ENCODE measurements at regions of chr12 and their contacts with region 1.

Region 1: DNA sequence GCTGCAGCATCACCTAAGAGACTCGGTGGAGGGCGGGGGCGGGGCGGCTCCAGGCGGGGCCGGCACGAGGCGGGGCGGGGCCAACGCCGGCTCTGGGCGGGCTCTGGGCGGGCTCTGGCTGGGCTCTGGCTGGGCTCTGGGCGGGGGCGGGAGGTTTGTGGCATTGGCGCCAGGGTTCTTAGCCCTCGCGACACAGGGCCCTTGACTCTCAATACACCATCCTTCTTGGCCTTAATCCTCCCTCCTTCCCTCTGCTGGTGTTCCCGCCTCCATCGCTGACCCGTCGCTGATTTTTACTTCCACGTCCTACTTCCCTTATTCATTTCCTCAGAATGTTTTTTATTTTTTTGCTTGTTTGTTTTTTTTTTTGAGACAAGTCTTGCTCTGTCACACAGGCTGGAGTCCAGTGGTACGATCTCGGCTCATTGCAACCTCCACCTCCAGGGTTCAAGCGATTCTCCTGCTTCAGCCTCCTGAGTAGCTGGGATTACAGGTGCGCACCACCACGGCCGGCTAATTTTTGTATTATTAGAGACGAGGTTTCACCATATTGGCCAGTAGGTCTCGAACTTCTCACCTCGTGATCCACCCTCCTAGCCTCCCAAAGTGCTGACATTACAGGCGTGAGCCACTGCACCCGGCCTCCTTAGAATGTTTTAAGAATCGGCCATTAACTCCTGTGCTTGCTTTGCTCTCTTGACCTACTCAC is at the start of gene BLTP3B:
- DNase-seq: peak; percentile 91 to 97
- H3K4me3 ChIP-seq: peak within 1 kb of the TSS; percentile 97 to 99
- H3K27ac ChIP-seq: peak within 1 kb of the TSS; percentile 100
- H3K4me1 ChIP-seq: peaks cover 0 to 38% (median 20%) of the 10 kb centered on the region in 4 donors
- H3K27me3 ChIP-seq: no peaks in the 10 kb centered on the region
- CTCF ChIP-seq: no peak

Region 2: DNA sequence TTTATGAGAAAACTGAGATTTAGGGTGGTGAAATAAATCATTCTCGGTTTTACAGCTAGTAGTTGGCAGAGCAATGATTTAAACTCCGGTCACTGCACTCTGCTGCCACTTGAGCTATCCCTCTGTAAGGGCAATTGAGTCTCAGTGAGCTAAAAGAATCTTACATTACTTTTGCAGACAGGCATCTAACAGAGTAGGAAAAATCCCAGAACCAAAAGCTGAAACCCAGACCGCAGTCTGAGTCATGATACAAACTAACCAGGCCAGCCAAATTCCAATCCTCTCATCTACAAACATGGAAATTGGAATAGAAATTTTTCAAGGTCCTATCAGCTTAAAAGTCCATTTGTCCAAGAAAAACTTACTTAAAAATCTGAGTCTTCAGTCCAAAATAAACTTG is 231.9 kb before region 1 on chr12:
- intact Hi-C with region 1: loop called (anchors 5 kb)
- DNase-seq: peak; percentile 23 to 67
- H3K4me3 ChIP-seq: peak overlapping the region; percentile 36 to 46
- H3K27ac ChIP-seq: peak overlapping the region; percentile 68 to 71
- H3K4me1 ChIP-seq: peaks cover 0 to 73% (median 22%) of the 10 kb centered on the region in 4 donors
- H3K27me3 ChIP-seq: no peaks in the 10 kb centered on the region
- CTCF ChIP-seq: peak in 1 of 2 experiments; percentile 9

Region 3: DNA sequence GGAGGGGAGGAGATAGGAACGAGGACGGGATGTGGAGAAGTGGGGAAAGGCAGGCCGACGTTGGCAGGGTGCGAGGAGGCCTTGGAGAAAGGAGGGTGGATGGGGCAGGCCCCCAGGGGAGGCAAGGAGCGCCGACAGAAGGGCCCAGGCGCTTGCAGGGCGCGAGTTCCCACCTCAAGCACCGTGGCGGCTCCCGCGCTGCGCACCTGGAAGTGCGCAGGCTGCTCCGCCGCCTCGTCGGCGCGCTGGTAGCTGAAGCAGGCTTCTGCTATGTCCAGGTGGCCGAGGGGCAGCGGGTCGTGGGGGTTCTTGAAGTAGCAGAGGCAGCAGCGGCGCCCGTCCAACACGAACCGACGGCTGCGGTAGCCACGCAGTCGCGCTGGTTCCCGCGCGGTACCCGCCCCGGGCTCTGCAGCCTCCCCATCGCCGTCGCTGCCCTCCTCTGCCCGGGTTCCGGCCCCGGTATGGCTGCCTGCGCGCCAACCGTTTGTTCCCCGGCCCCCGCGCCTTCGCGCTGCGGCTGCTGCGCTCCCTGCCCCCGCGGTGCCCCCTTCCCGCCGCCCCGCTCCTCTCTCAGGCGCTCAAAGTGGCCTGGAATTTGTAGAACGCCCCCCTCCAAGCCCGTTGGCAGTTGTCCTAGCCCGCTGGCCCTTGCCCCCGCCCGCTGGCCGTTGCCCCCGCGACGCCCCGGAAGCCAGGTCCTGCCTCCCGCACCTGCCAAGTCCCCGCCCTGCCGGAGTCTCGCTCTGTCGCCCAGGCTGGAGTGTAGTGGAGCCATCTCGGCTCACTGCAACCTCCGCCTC is 56.5 kb after region 1 on chr12:
- intact Hi-C with region 1: loop called (anchors 10 kb)
- DNase-seq: peak; percentile 51 to 86
- H3K4me3 ChIP-seq: peak overlapping the region; percentile 70 to 90
- H3K27ac ChIP-seq: peak overlapping the region; percentile 82 to 86
- H3K4me1 ChIP-seq: peaks cover 0 to 41% (median 19%) of the 10 kb centered on the region in 4 donors
- H3K27me3 ChIP-seq: no peaks in the 10 kb centered on the region
- CTCF ChIP-seq: no peak

Region 4: DNA sequence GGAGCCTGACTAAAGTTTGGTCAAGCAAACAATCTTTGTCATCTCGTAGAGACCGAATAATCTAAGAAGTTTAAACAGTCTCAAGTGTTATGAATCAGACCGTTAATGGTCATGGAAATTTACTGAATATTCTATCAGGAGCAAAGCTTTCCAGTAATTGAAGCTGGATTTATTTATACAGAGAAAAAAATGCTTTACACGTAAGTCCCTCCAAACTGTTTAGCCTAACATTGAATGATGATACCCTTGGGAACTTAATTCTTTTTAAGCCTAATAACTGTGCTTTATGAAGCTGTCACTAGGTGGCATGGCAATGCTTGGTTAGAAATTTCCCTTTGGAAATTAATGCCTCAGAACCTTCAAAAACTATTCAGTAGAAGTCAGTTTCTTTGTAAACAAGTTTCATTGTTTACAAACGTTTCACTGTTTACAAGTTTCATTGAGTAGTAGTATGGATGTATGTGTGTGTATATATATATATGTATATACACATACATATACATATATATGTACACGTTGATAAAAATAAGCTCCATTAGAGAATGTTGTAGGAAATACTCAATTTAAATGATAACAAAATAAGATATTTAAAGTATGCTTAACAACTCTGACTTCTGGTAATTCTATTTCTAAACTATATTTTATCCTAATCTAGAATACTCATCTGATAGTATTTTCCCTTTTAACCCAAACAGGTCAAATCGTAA is 91.7 kb after region 1 on chr12:
- intact Hi-C with region 1: no loop called
- DNase-seq: no peak
- H3K4me3 ChIP-seq: no peak overlapping the region
- H3K27ac ChIP-seq: no peak overlapping the region
- H3K4me1 ChIP-seq: peaks cover 0 to 7% (median 6%) of the 10 kb centered on the region in 4 donors
- H3K27me3 ChIP-seq: no peaks in the 10 kb centered on the region
- CTCF ChIP-seq: peak; percentile 68 to 72

Region 5: GRCh38 chr12:100266835-100267618 is 124.0 kb after region 1 on chr12 and contains the starts of genes DEPDC4 and SCYL2:
- intact Hi-C with region 1: loop called (anchors 5 kb)
- DNase-seq: peak; percentile 96 to 98
- H3K4me3 ChIP-seq: peak within 1 kb of the TSS; percentile 99
- H3K27ac ChIP-seq: peak within 1 kb of the TSS; percentile 99 to 100
- H3K4me1 ChIP-seq: peaks cover 0 to 30% (median 19%) of the 10 kb centered on the region in 4 donors
- H3K27me3 ChIP-seq: no peaks in the 10 kb centered on the region
- CTCF ChIP-seq: no peak

Region 6: DNA sequence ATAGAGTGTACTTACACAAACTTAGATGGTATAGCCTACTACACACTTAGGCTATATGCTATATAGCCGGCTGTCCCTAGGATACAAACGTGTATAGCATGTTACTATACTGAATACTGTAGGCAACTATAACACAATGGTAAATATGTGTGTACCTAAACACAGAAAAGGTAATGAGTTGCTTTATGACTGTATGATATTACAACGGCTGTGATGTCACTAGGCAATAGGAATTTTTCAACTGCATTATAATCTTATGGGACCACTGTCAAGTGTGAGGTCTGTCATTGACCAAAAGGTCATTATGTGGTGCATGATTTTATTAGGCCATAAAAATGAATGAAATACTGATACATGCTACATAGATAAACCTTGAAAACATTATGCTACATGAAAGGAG is 992.9 kb after region 1 on chr12:
- intact Hi-C with region 1: no loop called
- DNase-seq: no peak
- H3K4me3 ChIP-seq: no peak overlapping the region
- H3K27ac ChIP-seq: no peak overlapping the region
- H3K4me1 ChIP-seq: no peaks in the 10 kb centered on the region
- H3K27me3 ChIP-seq: no peaks in the 10 kb centered on the region
- CTCF ChIP-seq: no peak